Heart right ventricle (tissue), 16 donors: ENCODE measurements at regions of chr2 and their contacts with region 1.

Region 1: DNA sequence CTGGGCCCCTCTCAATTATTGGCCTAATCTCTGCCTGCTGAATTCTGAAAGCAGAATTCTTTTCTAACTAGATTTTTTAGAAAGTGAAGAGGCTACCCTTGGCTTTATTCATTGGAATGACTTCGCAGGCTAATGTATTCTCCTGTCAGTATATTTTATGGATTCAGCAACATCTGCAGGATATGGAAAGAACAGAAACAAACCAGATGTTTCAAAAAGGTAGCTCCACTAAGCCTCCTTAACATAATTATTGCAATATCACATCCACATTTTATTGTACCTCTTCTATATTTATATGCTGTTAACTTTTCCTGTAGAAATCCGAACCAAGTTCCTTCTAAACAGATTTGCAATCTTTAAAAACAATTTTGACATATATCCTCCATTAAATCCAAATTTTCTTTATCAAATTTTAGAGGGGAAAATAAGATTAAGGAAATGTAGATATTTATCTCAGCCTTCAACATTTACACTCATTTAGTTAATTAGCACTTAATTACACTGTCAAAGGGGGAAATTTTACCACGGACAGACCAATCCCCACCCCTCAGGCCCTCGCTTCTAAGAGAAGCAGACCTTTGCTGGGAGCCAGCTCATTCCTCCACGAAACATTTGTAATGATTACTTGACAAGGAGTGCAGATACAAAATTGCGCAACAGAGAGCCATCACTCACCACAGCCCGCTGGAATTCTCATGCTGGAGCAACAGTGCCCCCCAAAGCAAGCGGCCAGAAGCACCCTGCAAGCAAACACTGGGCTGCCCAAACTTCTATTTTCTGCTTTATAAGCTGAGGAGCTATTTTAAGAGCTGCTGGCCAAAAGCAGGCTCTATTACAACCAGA is 253.4 kb downstream of the ETAA1 start:
- DNase-seq: peak; percentile 75 to 82
- ATAC-seq: peak; percentile 89 to 94 (median 92)
- H3K4me3 ChIP-seq: no peak overlapping the region
- H3K27ac ChIP-seq: peak overlapping the region; percentile 37 to 88 (median 74)
- H3K4me1 ChIP-seq: peaks cover 6 to 35% (median 23%) of the 10 kb centered on the region in 9 donors
- H3K27me3 ChIP-seq: no peaks in the 10 kb centered on the region
- CTCF ChIP-seq: peak; percentile 34 to 85 (median 64)

Region 2: GRCh38 chr2:66434679-66435548 is 1215.6 kb before region 1 on chr2 and contains the start of gene MEIS1:
- intact Hi-C with region 1: loop called in 6 of 10 experiments (anchors 5 kb)
- DNase-seq: peak; percentile 87 to 92
- ATAC-seq: peak; percentile 84 to 91 (median 88)
- H3K4me3 ChIP-seq: peak within 1 kb of the TSS; percentile 39 to 87 (median 78)
- H3K27ac ChIP-seq: peak within 1 kb of the TSS; percentile 74 to 95 (median 90)
- H3K4me1 ChIP-seq: peaks cover 0 to 33% (median 0%) of the 10 kb centered on the region in 9 donors
- H3K27me3 ChIP-seq: peaks cover 0 to 98% (median 0%) of the 10 kb centered on the region in 7 donors
- CTCF ChIP-seq: no peak
- total RNA-seq, gene MEIS1: 24.8 to 63.8 (median 38.6) TPM

Region 3: DNA sequence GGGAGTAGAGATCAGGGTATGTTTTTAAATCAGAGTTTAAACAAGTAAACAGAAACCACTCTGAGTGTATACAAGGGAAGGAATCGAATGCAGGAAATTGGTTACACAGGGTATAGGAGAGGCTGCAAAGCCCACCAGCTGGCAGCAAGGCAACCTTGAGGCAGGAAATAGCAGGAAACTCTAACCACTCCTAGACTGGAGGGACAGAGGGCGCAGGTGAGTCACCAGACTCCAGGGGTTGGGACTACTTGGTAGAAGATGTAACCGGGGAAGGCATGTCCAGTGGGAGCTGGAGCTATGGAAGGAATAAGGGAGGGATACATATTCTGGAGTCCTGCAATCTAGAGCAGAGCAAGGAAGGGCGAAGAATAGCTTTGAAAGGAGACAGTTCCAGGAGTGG is 1063.3 kb before region 1 on chr2:
- intact Hi-C with region 1: loop called in 1 of 10 experiments (anchors 10 kb)
- DNase-seq: no peak
- ATAC-seq: peak in 1 of 8 donors; percentile 41
- H3K4me3 ChIP-seq: no peak overlapping the region
- H3K27ac ChIP-seq: no peak overlapping the region
- H3K4me1 ChIP-seq: peaks cover 0 to under 1% (median 0%) of the 10 kb centered on the region in 9 donors
- H3K27me3 ChIP-seq: peaks cover 0 to 69% (median 50%) of the 10 kb centered on the region in 7 donors
- CTCF ChIP-seq: peak in 3 of 9 donors; percentile 10 to 19 (median 15)

Region 4: GRCh38 chr2:67346718-67347407 is 303.6 kb before region 1 on chr2:
- intact Hi-C with region 1: loop called in 1 of 10 experiments (anchors 10 kb)
- DNase-seq: no peak
- ATAC-seq: no peak
- H3K4me3 ChIP-seq: no peak overlapping the region
- H3K27ac ChIP-seq: no peak overlapping the region
- H3K4me1 ChIP-seq: no peaks in the 10 kb centered on the region
- H3K27me3 ChIP-seq: no peaks in the 10 kb centered on the region
- CTCF ChIP-seq: no peak

Region 5: DNA sequence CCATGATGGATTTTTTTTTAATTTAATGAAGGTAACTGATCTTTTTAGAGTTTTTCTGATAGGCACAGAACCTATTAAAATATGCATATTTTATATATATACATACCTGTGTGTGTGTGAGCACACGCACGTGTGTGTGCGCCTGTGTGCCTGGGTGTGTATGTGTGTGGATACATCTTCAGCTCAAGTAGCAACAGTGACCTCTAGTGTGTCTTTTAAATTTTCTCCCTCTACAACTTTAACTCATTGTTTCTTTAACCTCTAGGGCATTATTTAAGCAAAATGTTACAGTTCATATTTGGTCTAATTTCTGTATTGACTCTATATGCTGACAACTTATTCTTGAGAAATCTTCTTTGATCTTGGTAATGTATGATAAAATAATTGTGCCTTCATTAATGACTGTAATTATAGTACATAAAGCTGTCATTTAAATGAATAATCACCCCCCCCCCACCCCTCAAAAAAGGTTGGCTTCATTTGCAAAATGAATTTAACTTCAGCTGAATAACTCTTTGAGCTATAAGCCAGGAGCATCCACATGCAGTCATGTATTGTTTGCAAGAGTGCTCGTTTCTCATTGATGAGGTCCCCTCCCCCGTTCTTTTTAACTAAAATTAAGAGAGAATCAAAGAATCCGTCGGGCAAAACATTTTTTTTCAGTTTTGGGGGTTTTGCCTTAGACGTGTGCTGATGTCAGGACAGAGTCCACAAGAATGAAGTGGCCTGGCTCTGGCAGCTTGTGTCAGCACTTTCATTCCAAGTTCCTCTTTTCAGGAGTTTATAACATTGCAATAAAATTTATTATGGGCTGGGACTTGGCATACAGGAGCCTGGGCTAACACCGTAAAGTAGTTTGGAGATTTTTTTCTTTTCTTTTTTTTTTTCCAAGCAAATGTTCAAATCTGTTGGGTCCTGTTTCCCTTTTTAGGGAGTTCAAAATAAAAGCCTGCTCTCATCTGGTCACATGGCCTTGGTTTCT is 173.4 kb before region 1 on chr2:
- intact Hi-C with region 1: loop called in 3 of 10 experiments (anchors 5 to 10 kb)
- DNase-seq: no peak
- ATAC-seq: peak in 5 of 8 donors; percentile 37 to 65 (median 53)
- H3K4me3 ChIP-seq: no peak overlapping the region
- H3K27ac ChIP-seq: peak overlapping the region in 1 of 10 donors; percentile 69
- H3K4me1 ChIP-seq: peaks cover 0 to 6% (median 0%) of the 10 kb centered on the region in 9 donors
- H3K27me3 ChIP-seq: no peaks in the 10 kb centered on the region
- CTCF ChIP-seq: peak in 7 of 9 donors; percentile 43 to 62 (median 50)

Region 6: DNA sequence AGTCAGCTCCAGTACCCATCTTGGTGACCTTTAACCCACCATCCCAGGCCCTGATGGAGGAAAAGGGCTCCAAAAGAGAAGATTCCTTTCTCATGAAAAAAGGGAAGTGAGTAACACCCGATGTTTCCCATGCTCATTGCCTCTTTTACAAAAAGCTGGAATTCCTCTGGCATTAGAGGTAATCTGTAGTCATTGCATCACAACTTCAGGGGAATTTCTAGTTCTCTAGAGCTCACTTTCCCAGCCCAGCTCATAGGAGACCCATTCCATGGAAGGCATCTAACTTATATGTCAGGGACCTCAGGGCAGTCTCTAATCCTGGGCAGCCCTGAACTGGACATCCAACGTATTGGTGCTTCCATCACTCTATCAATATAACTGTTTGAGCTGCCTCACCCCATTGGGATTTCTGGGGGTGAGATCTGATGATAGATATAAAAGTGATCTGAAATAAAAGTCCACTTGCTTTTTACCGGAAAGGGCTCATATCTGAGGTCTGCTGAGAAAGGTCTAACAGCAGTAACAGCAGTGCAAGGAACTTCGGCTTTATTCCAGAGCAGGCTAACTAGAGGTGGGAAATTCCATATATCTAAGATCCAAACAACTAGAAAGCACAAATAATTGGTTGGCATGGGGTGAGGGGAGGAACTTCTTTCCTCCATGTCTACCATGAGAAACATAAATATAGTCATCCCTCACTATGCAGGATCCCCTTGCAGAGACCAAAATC is 147.3 kb before region 1 on chr2:
- intact Hi-C with region 1: no loop called
- DNase-seq: no peak
- ATAC-seq: peak in 1 of 8 donors; percentile 82
- H3K4me3 ChIP-seq: no peak overlapping the region
- H3K27ac ChIP-seq: peak overlapping the region in 1 of 10 donors; percentile 78
- H3K4me1 ChIP-seq: peaks cover 0 to 4% (median 0%) of the 10 kb centered on the region in 9 donors
- H3K27me3 ChIP-seq: no peaks in the 10 kb centered on the region
- CTCF ChIP-seq: no peak

Region 7: DNA sequence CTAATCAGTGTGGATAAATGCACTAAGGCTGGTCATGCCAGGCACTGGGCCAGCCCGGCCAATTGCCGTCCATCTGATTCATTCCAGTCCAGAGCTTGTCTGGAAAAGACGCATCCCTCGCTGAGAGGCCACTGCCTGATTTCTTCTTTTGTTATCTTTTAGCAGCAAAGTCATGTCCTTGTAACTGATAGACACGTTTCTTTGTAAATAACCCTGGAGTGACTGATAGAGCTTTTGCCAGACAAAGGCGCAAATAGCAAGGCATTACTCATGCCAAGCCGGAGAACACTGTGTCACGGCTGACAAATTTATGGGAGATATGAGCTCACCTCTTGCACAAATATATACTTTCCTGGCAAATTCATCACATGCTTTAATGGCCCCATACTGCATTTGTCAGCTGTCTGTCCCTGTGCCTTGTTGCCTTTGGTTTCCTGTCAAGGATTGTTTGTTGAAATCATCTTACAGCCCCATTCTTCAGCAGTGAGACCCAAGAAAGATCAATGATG is 89.0 kb before region 1 on chr2:
- intact Hi-C with region 1: loop called in 4 of 10 experiments (anchors 5 kb)
- DNase-seq: peak; percentile 51 to 77
- ATAC-seq: peak in 7 of 8 donors; percentile 39 to 97 (median 85)
- H3K4me3 ChIP-seq: no peak overlapping the region
- H3K27ac ChIP-seq: peak overlapping the region; percentile 40 to 82 (median 76)
- H3K4me1 ChIP-seq: peaks cover 0 to 24% (median 6%) of the 10 kb centered on the region in 9 donors
- H3K27me3 ChIP-seq: no peaks in the 10 kb centered on the region
- CTCF ChIP-seq: no peak

Region 8: DNA sequence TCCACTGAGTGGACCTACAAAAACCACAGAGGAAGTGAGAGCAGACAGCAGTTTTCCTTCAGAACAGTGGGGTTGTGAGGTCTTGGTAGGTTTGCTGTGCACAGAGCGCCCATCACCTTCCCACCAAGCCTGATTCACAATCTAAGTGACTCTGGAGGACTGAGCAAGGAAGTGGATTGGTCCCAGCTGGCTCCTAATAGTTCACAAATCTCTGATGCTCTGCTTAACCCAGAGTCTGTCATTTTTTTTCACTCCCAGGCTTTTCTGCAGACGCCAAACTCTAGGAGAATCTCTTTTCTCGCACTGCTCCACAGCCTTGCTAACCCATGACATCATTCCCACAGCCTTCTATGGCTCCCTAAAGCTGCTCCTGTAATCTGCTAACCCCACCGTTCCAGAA is 131.9 kb after region 1 on chr2:
- intact Hi-C with region 1: no loop called
- DNase-seq: peak in 1 of 2 donors; percentile 38
- ATAC-seq: peak in 7 of 8 donors; percentile 38 to 82 (median 70)
- H3K4me3 ChIP-seq: no peak overlapping the region
- H3K27ac ChIP-seq: peak overlapping the region in 5 of 10 donors; percentile 23 to 58 (median 31)
- H3K4me1 ChIP-seq: peaks cover 0 to 6% (median 0%) of the 10 kb centered on the region in 9 donors
- H3K27me3 ChIP-seq: no peaks in the 10 kb centered on the region
- CTCF ChIP-seq: no peak

Region 9: GRCh38 chr2:67846370-67847070 is 196.0 kb after region 1 on chr2:
- intact Hi-C with region 1: loop called in 4 of 10 experiments (anchors 5 to 10 kb)
- DNase-seq: peak; percentile 41 to 81
- ATAC-seq: peak; percentile 71 to 91 (median 78)
- H3K4me3 ChIP-seq: peak overlapping the region in 5 of 10 donors; percentile 14 to 31 (median 27)
- H3K27ac ChIP-seq: no peak overlapping the region
- H3K4me1 ChIP-seq: peaks cover 0 to 19% (median 0%) of the 10 kb centered on the region in 9 donors
- H3K27me3 ChIP-seq: peaks cover 0 to 3% (median 0%) of the 10 kb centered on the region in 7 donors
- CTCF ChIP-seq: peak; percentile 45 to 81 (median 75)